H1 (cell line): ENCODE measurements at regions of chr6 and their contacts with region 1.

Region 1: GRCh38 chr6:44096612-44097011 is 30.6 kb downstream of the MRPL14 start:
- DNase-seq: peak in 1 of 2 experiments; percentile 75
- H3K4me3 ChIP-seq: no peak overlapping the region
- H3K27ac ChIP-seq: no peak overlapping the region
- H3K4me1 ChIP-seq: no peaks in the 10 kb centered on the region
- H3K27me3 ChIP-seq: no peaks in the 10 kb centered on the region
- CTCF ChIP-seq: peak; percentile 87 to 97 (median 87)
- EP300 ChIP-seq: no peak
- POLR2A ChIP-seq: no peak
- RAD21 ChIP-seq: peak; percentile 89 to 90

Region 2: GRCh38 chr6:43943781-43944250 is 152.8 kb before region 1 on chr6:
- CTCF ChIA-PET with region 1: no interaction called
- POLR2A ChIA-PET with region 1: no interaction called
- DNase-seq: no peak
- H3K4me3 ChIP-seq: no peak overlapping the region
- H3K27ac ChIP-seq: no peak overlapping the region
- H3K4me1 ChIP-seq: peaks cover 0 to 6% (median 0%) of the 10 kb centered on the region in 4 experiments; a peak in 4 of 7 replicates
- H3K27me3 ChIP-seq: no peaks in the 10 kb centered on the region
- CTCF ChIP-seq: no peak
- EP300 ChIP-seq: no peak
- POLR2A ChIP-seq: no peak
- RAD21 ChIP-seq: no peak; a peak in 1 of 4 replicates

Region 3: GRCh38 chr6:44127186-44128019 is 30.8 kb after region 1 on chr6 and contains the starts of genes MRPL14 and TMEM63B:
- CTCF ChIA-PET with region 1: interaction called, 255 read pairs
- POLR2A ChIA-PET with region 1: interaction called, 3 read pairs
- DNase-seq: peak; percentile 59 to 88
- H3K4me3 ChIP-seq: peak within 1 kb of the TSS; percentile 73 to 98 (median 79)
- H3K27ac ChIP-seq: peak within 1 kb of the TSS; percentile 33; the same call in 1 of the 2 replicates
- H3K4me1 ChIP-seq: peaks cover 4 to 22% (median 13%) of the 10 kb centered on the region in 4 experiments
- H3K27me3 ChIP-seq: no peaks in the 10 kb centered on the region
- CTCF ChIP-seq: no peak
- EP300 ChIP-seq: no peak
- POLR2A ChIP-seq: peak; percentile 68 to 89
- RAD21 ChIP-seq: no peak
- total RNA-seq, gene MRPL14: 81.8 and 82.0 TPM in 2 replicates
- total RNA-seq, gene TMEM63B: 60.5 and 61.1 TPM in 2 replicates

Region 4: GRCh38 chr6:44151348-44152108 is 54.9 kb after region 1 on chr6:
- CTCF ChIA-PET with region 1: interaction called, 26 read pairs
- POLR2A ChIA-PET with region 1: interaction called, 7 read pairs
- DNase-seq: peak; percentile 61 to 99
- H3K4me3 ChIP-seq: no peak overlapping the region
- H3K27ac ChIP-seq: no peak overlapping the region
- H3K4me1 ChIP-seq: peaks cover 0 to 10% (median 3%) of the 10 kb centered on the region in 4 experiments; a peak in 5 of 7 replicates
- H3K27me3 ChIP-seq: no peaks in the 10 kb centered on the region
- CTCF ChIP-seq: peak in 2 of 3 experiments; percentile 99 to 100; a peak in 3 of 4 replicates
- EP300 ChIP-seq: no peak
- POLR2A ChIP-seq: no peak
- RAD21 ChIP-seq: peak; percentile 71 to 82

Region 5: DNA sequence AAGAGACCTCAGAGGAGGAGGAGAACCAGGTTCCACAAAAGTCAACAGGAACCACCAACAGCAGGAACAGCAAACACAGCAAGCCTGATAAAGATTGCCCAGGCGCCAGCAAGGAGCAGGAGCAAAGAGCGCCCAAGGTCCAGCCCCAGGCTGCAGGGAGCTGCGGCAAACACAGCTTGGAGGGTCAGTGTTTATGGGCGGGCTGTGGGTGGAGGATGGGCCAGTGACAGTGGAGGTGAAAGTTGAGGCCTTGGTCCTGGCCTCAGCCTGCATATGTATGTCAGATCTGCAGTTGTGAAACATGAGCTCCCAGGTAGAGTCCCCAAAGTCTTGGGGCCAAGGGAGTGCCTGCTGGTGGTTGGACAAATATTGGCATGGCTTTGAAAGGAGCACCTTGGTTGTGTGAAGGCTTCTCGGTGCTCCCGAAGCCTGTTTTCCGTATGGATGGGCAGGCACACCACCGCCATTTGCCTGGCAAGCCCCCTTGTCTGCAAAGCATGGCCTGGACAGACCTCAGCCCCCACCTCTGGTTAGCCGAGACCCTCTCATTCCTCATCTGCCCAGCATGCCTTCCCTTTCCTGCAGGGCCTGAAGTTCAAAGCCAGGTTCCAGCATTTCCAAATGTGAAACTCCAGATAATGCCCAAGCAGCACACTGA is 60.0 kb after region 1 on chr6:
- CTCF ChIA-PET with region 1: interaction called, 26 read pairs
- POLR2A ChIA-PET with region 1: interaction called, 7 read pairs
- DNase-seq: no peak
- H3K4me3 ChIP-seq: no peak overlapping the region
- H3K27ac ChIP-seq: no peak overlapping the region
- H3K4me1 ChIP-seq: peaks cover 0 to 12% (median 4%) of the 10 kb centered on the region in 4 experiments; a peak in 5 of 7 replicates
- H3K27me3 ChIP-seq: no peaks in the 10 kb centered on the region
- CTCF ChIP-seq: no peak
- EP300 ChIP-seq: no peak
- POLR2A ChIP-seq: no peak
- RAD21 ChIP-seq: no peak

Region 6: DNA sequence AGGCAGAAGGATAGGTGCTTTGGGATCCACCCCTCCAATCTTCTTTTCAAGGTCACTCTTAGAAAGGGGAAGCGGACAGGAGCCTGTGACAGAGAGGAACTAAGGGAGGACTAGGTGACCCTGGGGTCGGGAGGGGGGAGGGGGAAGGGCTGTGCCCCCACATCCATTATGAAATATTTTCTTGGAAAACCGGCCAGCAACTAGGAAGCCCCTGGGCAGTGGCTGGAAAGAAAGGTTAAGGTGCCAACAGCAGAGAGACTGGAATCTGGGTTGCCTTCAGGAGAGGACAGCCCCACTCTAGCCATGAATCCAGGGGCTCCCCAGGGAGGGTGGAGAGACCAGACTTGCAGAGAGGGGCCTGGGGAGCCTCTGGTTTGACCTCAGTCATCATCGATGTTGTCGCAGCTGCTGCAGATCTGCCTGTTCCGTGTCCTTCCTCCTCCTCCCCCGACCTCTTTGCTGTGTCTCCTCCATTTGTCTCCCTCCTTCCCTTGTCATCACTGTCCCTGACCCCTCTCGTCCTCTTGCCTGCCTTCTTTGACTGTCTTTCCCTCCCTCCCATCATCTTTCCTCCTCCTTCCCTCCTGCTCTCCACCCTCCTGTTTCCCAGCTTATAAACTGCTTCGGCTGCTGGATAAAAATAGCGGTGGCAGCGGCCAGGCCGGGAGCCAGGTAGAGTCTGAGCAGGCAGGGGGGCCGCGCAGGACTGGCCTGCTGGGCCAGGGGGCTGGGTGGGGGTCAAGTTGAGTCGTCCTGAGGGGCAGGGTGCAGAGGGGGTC is 129.9 kb after region 1 on chr6:
- CTCF ChIA-PET with region 1: interaction called, 22 read pairs
- POLR2A ChIA-PET with region 1: no interaction called
- DNase-seq: no peak
- H3K4me3 ChIP-seq: peak overlapping the region in 1 of 4 experiments; percentile 29; a peak in 1 of 8 replicates
- H3K27ac ChIP-seq: no peak overlapping the region; the same call in 1 of the 2 replicates
- H3K4me1 ChIP-seq: peaks cover 15 to 40% (median 32%) of the 10 kb centered on the region in 4 experiments
- H3K27me3 ChIP-seq: no peaks in the 10 kb centered on the region
- CTCF ChIP-seq: no peak
- EP300 ChIP-seq: no peak
- POLR2A ChIP-seq: no peak
- RAD21 ChIP-seq: no peak